Right ventricle myocardium superior (tissue), 1 donor: ENCODE measurements at regions of chr22 and their contacts with region 1.

Region 1: GRCh38 chr22:25362215-25362882 is 142.9 kb downstream of the CRYBB2 start:
- DNase-seq: peak; percentile 81
- ATAC-seq: peak; percentile 64

Region 2: DNA sequence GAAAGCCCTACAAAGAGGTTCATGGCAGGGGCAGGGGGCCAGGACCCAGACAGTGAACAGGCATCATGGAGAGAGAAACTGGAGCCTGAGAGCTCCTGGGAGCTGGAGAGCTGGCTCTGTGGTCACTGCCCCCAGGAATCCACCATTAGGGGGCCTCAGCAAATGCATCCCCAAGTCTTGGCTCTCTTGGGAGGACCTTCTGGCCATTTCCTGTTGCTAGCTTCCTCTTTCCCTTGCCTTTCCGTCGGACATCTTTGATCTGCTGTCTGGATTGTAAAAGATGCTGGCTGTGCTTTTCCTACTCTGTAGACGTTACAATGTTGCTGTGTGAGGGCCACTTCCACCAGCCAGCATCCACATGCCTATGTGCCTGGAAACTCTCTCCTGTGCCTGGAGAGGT is 150.0 kb before region 1 on chr22:
- intact Hi-C with region 1: no loop called
- DNase-seq: no peak
- ATAC-seq: no peak

Region 3: GRCh38 chr22:25237503-25237902 is 124.8 kb before region 1 on chr22:
- intact Hi-C with region 1: no loop called
- DNase-seq: no peak
- ATAC-seq: no peak

Region 4: DNA sequence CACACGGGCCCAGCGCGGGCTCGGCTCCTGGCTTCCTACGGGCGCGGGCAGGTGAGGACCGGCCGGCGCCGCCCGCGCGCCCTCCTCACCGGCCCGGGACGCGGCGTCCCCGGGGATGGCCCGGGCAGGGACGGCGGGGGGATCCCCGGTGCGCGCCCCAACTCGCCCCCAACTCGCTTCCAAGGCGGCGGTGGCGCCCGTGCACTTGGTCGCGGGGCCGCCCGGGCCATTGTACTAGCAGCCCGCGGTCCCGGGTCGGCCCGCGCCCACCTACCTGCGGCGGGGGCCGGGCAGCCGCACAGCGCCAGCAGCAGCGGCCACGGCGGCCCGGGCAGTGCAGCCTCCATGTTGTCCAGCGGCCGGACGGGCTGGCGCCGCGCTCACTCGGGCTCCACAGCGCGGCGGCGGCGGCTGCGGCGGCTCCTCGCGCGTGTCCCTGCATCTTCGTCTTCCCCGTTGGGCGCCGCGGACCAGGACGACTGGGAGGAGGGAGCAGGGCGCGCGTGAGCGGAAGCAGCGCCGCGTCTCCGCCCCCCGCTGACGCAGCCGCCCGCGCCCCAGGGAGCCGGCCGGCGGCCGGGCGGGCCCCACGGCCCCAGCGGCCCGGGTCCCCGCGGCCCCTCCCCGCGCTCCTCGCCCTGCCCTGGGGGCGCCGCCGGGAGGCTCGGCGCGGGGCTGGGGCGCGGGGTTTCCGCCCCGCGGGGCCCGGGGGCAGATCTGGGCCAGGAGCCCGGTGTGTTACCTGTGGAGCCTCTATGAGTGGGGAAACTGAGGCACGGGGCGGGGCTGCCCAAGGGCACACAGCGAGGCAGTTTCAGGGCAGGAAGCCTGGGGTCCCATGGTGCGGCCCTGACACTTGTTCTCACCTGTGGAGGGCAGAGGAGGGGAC is 42.8 kb after region 1 on chr22:
- intact Hi-C with region 1: loop called (anchors 5 kb)
- DNase-seq: peak; percentile 91
- ATAC-seq: peak; percentile 74

Region 5: DNA sequence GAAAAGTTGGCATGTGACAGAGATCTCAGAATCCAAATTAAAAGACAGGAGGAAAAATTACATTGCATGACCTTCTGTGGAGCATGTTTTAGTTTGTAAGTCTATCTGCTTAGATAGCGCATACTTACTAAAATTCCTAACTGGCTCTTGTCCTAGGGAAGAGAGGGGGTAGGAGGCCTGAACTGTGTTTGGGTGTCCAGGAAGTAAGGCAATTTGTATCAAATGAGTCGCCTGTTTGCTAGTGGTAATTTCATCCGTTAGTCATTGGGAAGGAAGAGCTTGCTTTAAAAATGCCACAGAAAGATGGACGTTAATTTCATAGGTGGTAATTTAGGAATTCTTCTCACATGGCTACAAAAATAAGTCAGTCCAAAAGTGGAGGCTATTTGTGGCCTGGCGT is 220.6 kb after region 1 on chr22:
- intact Hi-C with region 1: no loop called
- DNase-seq: no peak
- ATAC-seq: no peak